Naive thymus-derived CD4-positive, alpha-beta T cell (primary cell): ENCODE measurements at regions of chr12 and their contacts with region 1.

Region 1: DNA sequence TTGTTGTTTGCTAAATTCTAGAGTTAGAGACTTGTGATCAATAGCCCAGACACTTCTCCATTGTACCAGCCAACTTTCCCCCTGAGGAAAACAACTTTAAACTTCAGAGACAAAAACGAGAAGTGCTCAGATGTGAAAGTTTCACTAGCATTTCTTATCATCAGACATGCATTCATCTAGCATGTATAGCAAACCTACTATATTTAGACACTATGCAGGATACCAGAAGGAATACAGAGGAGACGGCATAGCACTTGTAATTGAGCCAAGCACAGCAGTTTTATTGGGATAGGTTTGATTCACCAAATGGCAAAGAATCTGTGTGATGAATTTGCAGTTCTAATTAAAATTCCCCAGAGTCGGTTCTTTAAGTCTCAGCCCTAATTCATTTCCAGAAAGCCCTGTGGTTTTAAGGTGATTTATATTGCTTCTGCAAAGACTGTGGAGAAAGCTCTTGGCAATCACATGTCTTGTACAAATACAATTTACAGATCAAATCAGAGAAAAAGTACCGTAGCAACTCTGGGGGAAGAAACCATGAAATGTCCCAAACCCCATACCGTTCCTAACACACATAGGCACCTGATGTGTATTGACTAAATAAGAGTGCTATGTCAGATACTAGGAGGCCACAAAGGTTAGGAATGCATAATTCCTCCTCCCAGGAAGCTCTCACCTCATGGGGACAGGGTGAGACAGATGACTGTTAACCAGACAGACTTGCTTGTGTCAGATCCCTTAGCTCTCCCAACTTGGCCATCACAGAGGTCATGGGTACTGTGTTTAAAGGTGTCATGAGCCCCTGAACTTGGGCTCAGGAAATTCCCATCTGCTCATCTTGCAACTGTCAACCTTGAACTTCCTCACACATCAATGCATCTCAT is 69.6 kb upstream of the KRAS start:
- DNase-seq: no peak
- ATAC-seq: no peak
- H3K4me3 ChIP-seq: no peak overlapping the region
- H3K4me3 Mint-ChIP-seq: peak overlapping the region in 5 of 10 donors; percentile 8 to 79 (median 49)
- H3K27ac ChIP-seq: no peak overlapping the region
- H3K27ac Mint-ChIP-seq: peak overlapping the region in 8 of 9 donors; percentile 23 to 96 (median 72)
- H3K4me1 ChIP-seq: peaks cover 19 to 44% of the 10 kb centered on the region in 2 donors
- H3K4me1 Mint-ChIP-seq: peaks cover 33 to 50% (median 49%) of the 10 kb centered on the region in 7 donors
- H3K27me3 ChIP-seq: no peaks in the 10 kb centered on the region
- H3K27me3 Mint-ChIP-seq: peaks cover 0 to 6% (median 0%) of the 10 kb centered on the region in 5 donors

Region 2: DNA sequence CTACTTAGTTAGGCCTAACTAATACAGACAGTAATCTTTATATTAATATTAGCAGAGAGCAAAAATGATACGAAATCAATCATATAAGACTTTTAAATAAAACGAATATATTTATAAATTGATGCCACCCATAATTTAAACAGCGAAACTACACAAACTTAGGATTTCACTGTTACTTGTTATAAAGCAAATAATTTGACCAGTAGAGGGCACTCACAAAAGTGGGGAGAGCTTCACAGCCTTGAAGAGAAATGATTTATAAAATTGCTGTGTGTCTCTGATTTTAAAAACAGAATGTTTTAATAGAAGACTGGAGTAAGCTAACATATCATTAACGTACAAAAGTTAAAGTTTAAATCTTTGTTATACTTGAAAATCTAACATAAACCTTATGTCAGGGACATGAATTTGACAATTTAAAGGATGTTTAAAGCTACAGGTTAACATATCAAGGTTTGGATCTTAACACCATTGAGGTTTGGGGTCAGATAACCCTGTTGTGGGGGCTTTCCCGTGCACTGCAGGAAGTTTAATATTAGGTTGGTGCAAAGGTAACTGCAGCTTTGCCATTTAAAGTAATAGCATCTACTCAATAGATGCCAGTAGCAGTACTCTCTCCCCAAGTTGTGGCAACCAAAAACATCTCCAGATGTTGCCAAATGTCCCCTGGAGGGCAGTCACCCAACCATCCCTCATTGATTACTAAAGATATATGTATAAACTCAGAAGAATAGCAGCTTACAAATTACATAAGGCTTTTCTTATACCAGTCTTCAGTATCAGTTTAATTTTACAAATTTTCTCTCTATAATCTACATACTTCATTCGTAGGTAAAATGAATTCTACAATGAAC is 79.0 kb before region 1 on chr12:
- CTCF ChIA-PET with region 1: interaction called, 4 read pairs
- POLR2A ChIA-PET with region 1: interaction called, 4 read pairs
- intact Hi-C with region 1: loop called in 1 of 2 experiments (anchors 2 kb)
- DNase-seq: peak in 7 of 9 donors; percentile 48 to 71 (median 64)
- ATAC-seq: peak; percentile 89
- H3K4me3 ChIP-seq: no peak overlapping the region
- H3K4me3 Mint-ChIP-seq: peak overlapping the region in 1 of 10 donors; percentile 21
- H3K27ac ChIP-seq: peak overlapping the region; percentile 20
- H3K27ac Mint-ChIP-seq: peak overlapping the region in 6 of 9 donors; percentile 44 to 84 (median 65)
- H3K4me1 ChIP-seq: peaks cover 10% of the 10 kb centered on the region in 2 donors
- H3K4me1 Mint-ChIP-seq: peaks cover 17 to 79% (median 53%) of the 10 kb centered on the region in 7 donors
- H3K27me3 ChIP-seq: no peaks in the 10 kb centered on the region
- H3K27me3 Mint-ChIP-seq: no peaks in the 10 kb centered on the region

Region 3: DNA sequence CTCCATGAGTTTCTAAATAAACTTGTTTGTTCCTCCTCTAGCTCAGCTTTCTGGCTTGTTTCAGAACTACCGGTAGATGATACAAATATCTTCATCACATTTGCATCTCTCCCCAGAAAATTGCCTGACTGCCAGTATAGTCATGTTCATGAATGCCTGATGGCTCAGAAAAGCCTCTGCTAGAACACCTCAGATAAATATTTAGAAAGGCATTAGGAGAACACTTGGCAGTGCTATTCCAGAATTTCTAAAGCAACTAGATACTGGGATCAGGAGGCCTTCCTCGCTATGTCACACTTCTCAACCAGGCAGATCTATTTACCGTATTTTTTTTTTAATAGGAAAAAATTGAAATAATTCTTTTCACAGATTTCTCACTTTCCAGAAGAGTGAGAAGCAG is 37.4 kb before region 1 on chr12:
- CTCF ChIA-PET with region 1: no interaction called
- POLR2A ChIA-PET with region 1: interaction called, 5 read pairs
- intact Hi-C with region 1: loop called in 1 of 2 experiments (anchors 2 kb)
- DNase-seq: no peak
- ATAC-seq: no peak
- H3K4me3 ChIP-seq: no peak overlapping the region
- H3K4me3 Mint-ChIP-seq: peak overlapping the region in 7 of 10 donors; percentile 19 to 70 (median 53)
- H3K27ac ChIP-seq: peak overlapping the region; percentile 41
- H3K27ac Mint-ChIP-seq: peak overlapping the region in 7 of 9 donors; percentile 73 to 92 (median 81)
- H3K4me1 ChIP-seq: peaks cover 22 to 48% of the 10 kb centered on the region in 2 donors
- H3K4me1 Mint-ChIP-seq: peaks cover 12 to 66% (median 57%) of the 10 kb centered on the region in 7 donors
- H3K27me3 ChIP-seq: no peaks in the 10 kb centered on the region
- H3K27me3 Mint-ChIP-seq: peaks cover 0 to 3% (median 0%) of the 10 kb centered on the region in 5 donors

Region 4: DNA sequence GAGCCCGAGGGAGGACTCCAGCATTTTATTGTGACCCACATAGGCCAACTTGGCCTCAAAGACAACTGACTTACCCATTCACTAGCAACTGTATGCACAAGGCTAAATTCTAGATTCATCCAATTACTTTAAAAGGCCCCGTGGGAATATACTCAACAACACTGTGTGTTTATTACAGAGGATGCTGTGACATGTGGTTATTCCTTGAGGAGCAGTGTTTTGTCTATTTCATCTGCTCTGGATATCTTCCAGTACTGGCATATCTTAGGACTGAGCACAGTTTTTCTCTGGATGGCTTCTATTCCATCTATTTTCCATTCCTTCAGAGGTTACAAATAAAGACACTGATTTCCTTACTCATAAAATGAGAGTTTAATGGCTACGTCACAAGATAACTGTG is 17.6 kb after region 1 on chr12:
- CTCF ChIA-PET with region 1: no interaction called
- POLR2A ChIA-PET with region 1: interaction called, 6 read pairs
- intact Hi-C with region 1: loop called in 1 of 2 experiments (anchors 2 kb)
- DNase-seq: no peak
- ATAC-seq: no peak
- H3K4me3 ChIP-seq: no peak overlapping the region
- H3K4me3 Mint-ChIP-seq: no peak overlapping the region
- H3K27ac ChIP-seq: no peak overlapping the region
- H3K27ac Mint-ChIP-seq: no peak overlapping the region
- H3K4me1 ChIP-seq: peaks cover 0 to 3% of the 10 kb centered on the region in 2 donors
- H3K4me1 Mint-ChIP-seq: peaks cover 0 to 10% (median 4%) of the 10 kb centered on the region in 7 donors
- H3K27me3 ChIP-seq: no peaks in the 10 kb centered on the region
- H3K27me3 Mint-ChIP-seq: peaks cover 0 to 31% (median 0%) of the 10 kb centered on the region in 5 donors

Region 5: GRCh38 chr12:25377469-25378177 is 57.3 kb after region 1 on chr12:
- CTCF ChIA-PET with region 1: interaction called, 4 read pairs
- POLR2A ChIA-PET with region 1: interaction called, 12 read pairs
- intact Hi-C with region 1: loop called in 1 of 2 experiments (anchors 1 kb)
- DNase-seq: peak in 8 of 9 donors; percentile 46 to 81 (median 68)
- ATAC-seq: peak; percentile 90
- H3K4me3 ChIP-seq: no peak overlapping the region
- H3K4me3 Mint-ChIP-seq: peak overlapping the region; percentile 26 to 70 (median 60)
- H3K27ac ChIP-seq: peak overlapping the region; percentile 80
- H3K27ac Mint-ChIP-seq: peak overlapping the region; percentile 82 to 97 (median 92)
- H3K4me1 ChIP-seq: peaks cover 9 to 38% of the 10 kb centered on the region in 2 donors
- H3K4me1 Mint-ChIP-seq: peaks cover 27 to 71% (median 68%) of the 10 kb centered on the region in 7 donors
- H3K27me3 ChIP-seq: no peaks in the 10 kb centered on the region
- H3K27me3 Mint-ChIP-seq: no peaks in the 10 kb centered on the region

Region 6: DNA sequence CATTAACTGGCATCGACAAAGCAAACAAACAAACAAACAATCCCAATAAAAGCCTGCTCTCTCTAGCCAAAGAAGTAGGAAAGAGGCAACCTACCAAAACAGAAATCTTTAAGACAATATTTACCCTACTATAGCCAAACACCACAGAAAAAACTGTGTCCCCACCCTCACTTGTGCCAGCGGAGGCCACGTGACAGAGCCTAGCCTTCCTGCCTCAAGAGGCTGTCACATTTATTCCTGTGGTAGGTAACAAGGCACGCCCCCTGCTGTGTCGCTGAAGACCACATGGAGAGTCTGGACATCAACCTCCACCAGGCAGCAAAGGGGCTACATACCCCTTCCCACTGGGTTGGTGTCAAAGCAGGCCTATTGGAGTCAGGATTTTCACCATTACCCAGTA is 84.6 kb after region 1 on chr12:
- CTCF ChIA-PET with region 1: no interaction called
- POLR2A ChIA-PET with region 1: no interaction called
- intact Hi-C with region 1: no loop called
- DNase-seq: no peak
- ATAC-seq: no peak
- H3K4me3 ChIP-seq: no peak overlapping the region
- H3K4me3 Mint-ChIP-seq: no peak overlapping the region
- H3K27ac ChIP-seq: no peak overlapping the region
- H3K27ac Mint-ChIP-seq: no peak overlapping the region
- H3K4me1 ChIP-seq: no peaks in the 10 kb centered on the region
- H3K4me1 Mint-ChIP-seq: no peaks in the 10 kb centered on the region
- H3K27me3 ChIP-seq: no peaks in the 10 kb centered on the region
- H3K27me3 Mint-ChIP-seq: peaks cover 0 to 12% (median 0%) of the 10 kb centered on the region in 5 donors

Region 7: GRCh38 chr12:25648460-25648859 is 328.1 kb after region 1 on chr12:
- CTCF ChIA-PET with region 1: no interaction called
- POLR2A ChIA-PET with region 1: no interaction called
- intact Hi-C with region 1: no loop called
- DNase-seq: no peak
- ATAC-seq: no peak
- H3K4me3 ChIP-seq: no peak overlapping the region
- H3K4me3 Mint-ChIP-seq: no peak overlapping the region
- H3K27ac ChIP-seq: no peak overlapping the region
- H3K27ac Mint-ChIP-seq: no peak overlapping the region
- H3K4me1 ChIP-seq: no peaks in the 10 kb centered on the region
- H3K4me1 Mint-ChIP-seq: peaks cover 0 to 2% (median under 1%) of the 10 kb centered on the region in 7 donors
- H3K27me3 ChIP-seq: no peaks in the 10 kb centered on the region
- H3K27me3 Mint-ChIP-seq: peaks cover 0 to 5% (median 0%) of the 10 kb centered on the region in 5 donors